ENCODE measurements at regions of chr1 and their contacts with region 1.

Region 1: DNA sequence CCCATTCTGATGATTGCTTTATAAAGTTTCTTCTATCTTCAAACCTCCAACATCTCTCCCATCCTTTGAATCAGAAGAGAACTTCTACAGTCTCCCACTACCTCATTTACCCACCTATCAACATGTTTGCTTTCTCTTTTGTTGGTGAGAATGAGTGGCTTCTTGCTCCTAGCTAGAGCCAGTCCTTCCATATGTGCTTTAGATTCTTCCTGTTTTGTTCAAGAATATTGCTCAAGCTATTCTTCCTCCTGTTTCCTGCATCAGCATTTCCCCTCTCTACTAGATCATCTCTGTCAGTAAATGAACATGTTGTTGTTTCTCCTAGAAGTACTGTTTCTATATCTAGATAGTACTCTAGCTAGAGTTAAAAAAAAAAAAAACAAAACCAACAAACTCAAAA is 6.3 kb downstream of the ATF6 start:
- DNase-seq: no peak
- CTCF ChIP-seq: no peak

Region 2: GRCh38 chr1:160997323-160998038 is 774.9 kb before region 1 on chr1:
- CTCF ChIA-PET with region 1: no interaction called
- POLR2A ChIA-PET with region 1: no interaction called
- DNase-seq: peak; percentile 66
- CTCF ChIP-seq: peak; percentile 81

Region 3: GRCh38 chr1:161792740-161793139 is 20.3 kb after region 1 on chr1:
- CTCF ChIA-PET with region 1: interaction called, 17 read pairs
- POLR2A ChIA-PET with region 1: no interaction called
- DNase-seq: peak; percentile 47
- CTCF ChIP-seq: peak; percentile 28

Region 4: DNA sequence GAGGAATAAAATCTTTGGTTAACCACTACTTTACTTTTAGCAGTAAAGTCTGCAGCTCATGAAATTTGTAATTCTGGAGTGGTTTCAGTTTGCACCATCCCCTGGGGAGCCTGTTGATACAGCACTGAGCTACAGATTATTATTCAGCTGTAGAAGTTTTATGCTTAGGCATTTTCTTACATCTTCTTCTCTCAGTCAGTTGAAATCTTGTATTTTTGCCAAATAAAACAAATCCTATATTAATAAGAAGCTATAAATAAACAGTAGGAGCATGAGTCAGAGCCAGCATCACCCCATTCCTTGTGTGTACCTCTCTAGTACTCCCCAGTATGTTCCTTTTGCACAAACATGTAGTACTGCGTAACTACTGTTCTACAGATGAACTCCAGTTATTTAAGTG is 112.6 kb after region 1 on chr1:
- CTCF ChIA-PET with region 1: no interaction called
- POLR2A ChIA-PET with region 1: no interaction called
- DNase-seq: no peak
- CTCF ChIP-seq: no peak